Caco-2 (cell line): ENCODE measurements at regions of chr7 and their contacts with region 1.

Region 1: DNA sequence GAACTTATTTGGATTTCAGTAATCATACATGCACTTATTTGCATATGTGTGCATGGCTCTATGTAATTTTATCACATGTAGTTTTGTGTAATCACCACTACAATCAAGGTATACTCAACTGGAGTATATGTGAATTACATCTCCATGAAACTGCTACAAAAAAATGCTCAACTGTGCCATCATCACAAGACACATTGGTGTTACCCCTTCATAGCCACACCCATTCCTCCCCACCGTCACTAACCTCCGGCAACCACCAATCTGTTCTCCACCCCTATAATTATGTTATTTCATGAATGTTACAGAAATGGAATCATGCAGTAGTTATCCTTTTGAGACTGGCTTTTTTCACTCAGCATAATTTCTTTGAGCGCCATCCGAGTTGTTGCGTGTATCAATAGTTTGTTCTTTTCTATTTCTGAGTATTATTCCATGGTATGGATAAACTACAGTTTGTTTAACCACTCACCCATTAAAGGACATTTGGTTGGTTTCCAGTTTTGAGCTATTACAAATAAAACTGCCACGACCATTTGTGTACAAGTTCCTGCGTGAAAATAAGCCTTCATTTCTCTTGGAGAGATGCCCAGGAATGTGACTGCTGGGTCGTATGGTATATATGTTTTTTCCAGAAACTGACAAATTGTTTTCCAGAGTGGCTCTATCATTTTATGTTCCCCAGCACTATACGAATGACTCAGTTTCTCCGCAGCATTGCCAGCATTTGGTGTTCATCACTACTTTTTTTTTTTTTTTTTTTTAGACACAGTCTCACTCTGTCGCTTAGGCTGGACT is 11.3 kb upstream of the SMO start:
- DNase-seq: no peak
- H3K4me3 ChIP-seq: no peak overlapping the region
- H3K4me3 Mint-ChIP-seq: no peak overlapping the region
- H3K27ac Mint-ChIP-seq: no peak overlapping the region
- H3K4me1 ChIP-seq: no peaks in the 10 kb centered on the region
- H3K4me1 Mint-ChIP-seq: no peaks in the 10 kb centered on the region
- H3K27me3 ChIP-seq: no peaks in the 10 kb centered on the region
- H3K27me3 Mint-ChIP-seq: peaks cover 2% of the 10 kb centered on the region
- CTCF ChIP-seq: no peak

Region 2: GRCh38 chr7:129054438-129055293 is 122.4 kb before region 1 on chr7 and contains the start of gene TNPO3:
- CTCF ChIA-PET with region 1: no interaction called
- POLR2A ChIA-PET with region 1: interaction called, 12 read pairs
- intact Hi-C with region 1: no loop called
- DNase-seq: peak; percentile 95
- H3K4me3 ChIP-seq: peak within 1 kb of the TSS; percentile 87
- H3K4me3 Mint-ChIP-seq: peak within 1 kb of the TSS; percentile 98
- H3K27ac Mint-ChIP-seq: peak within 1 kb of the TSS; percentile 99
- H3K4me1 ChIP-seq: no peaks in the 10 kb centered on the region
- H3K4me1 Mint-ChIP-seq: peaks cover 3% of the 10 kb centered on the region
- H3K27me3 ChIP-seq: no peaks in the 10 kb centered on the region
- H3K27me3 Mint-ChIP-seq: peaks cover 4% of the 10 kb centered on the region
- CTCF ChIP-seq: no peak
- total RNA-seq, gene TNPO3: 56.5 and 59.8 TPM in 2 replicates